ENCODE measurements at regions of chr12 and their contacts with region 1.

Region 1: GRCh38 chr12:7241404-7242005 is 52.0 kb downstream of the PEX5 start:
- DNase-seq: peak; percentile 38 to 78 (median 48)
- ATAC-seq: peak; percentile 90
- H3K4me3 ChIP-seq: no peak overlapping the region
- H3K27ac ChIP-seq: peak overlapping the region; percentile 13; the same call in 1 of the 3 replicates
- H3K4me1 ChIP-seq: peaks cover 0 to 21% of the 10 kb centered on the region in 2 experiments; a peak in 4 of 5 replicates
- H3K27me3 ChIP-seq: no peaks in the 10 kb centered on the region
- CTCF ChIP-seq: no peak
- EP300 ChIP-seq: peak; percentile 86
- POLR2A ChIP-seq: no peak
- RAD21 ChIP-seq: peak in 1 of 2 experiments; percentile 25; a peak in 2 of 4 replicates

Region 2: DNA sequence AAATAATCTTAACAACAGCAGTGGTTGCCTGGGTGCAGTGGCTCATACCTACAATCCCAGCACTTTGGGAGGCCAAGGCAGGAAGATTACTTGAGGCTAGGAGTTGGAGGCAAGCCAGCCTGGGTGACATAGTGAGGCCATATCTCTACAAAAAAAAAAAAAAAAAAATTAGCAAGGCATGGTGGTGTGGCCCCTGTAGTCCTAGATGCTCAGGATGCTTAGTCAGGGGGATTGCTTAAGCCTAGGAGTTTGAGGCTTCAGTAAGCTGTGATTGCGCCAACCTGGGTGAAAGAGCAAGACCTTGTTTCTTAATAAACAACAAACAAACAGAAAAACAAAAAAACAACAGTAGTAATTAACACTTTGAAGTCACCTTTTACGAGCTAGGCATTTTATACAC is 61.7 kb after region 1 on chr12:
- CTCF ChIA-PET with region 1: no interaction called
- POLR2A ChIA-PET with region 1: interaction called, 3 read pairs
- in situ Hi-C with region 1: loop called (anchors 5 kb)
- intact Hi-C with region 1: loop called (anchors 5 kb)
- DNase-seq: peak in 1 of 4 experiments; percentile 69
- ATAC-seq: peak; percentile 78
- H3K4me3 ChIP-seq: no peak overlapping the region
- H3K27ac ChIP-seq: no peak overlapping the region
- H3K4me1 ChIP-seq: peaks cover 4 to 21% of the 10 kb centered on the region in 2 experiments; a peak in 4 of 5 replicates
- H3K27me3 ChIP-seq: no peaks in the 10 kb centered on the region
- CTCF ChIP-seq: no peak
- EP300 ChIP-seq: no peak; the same call in 1 of the 2 replicates
- POLR2A ChIP-seq: no peak
- RAD21 ChIP-seq: no peak

Measured in K562 (cell line).